ENCODE measurements at regions of chr3 and their contacts with region 1.

Region 1: GRCh38 chr3:44098656-44099415 is 142.8 kb upstream of the TOPAZ1 start:
- DNase-seq: no peak
- H3K4me3 ChIP-seq: no peak overlapping the region
- H3K27ac ChIP-seq: no peak overlapping the region
- H3K4me1 ChIP-seq: peaks cover 0 to 7% (median 3%) of the 10 kb centered on the region in 4 experiments; a peak in 5 of 7 replicates
- H3K27me3 ChIP-seq: no peaks in the 10 kb centered on the region
- CTCF ChIP-seq: no peak
- EP300 ChIP-seq: no peak
- POLR2A ChIP-seq: no peak
- RAD21 ChIP-seq: no peak

Region 2: DNA sequence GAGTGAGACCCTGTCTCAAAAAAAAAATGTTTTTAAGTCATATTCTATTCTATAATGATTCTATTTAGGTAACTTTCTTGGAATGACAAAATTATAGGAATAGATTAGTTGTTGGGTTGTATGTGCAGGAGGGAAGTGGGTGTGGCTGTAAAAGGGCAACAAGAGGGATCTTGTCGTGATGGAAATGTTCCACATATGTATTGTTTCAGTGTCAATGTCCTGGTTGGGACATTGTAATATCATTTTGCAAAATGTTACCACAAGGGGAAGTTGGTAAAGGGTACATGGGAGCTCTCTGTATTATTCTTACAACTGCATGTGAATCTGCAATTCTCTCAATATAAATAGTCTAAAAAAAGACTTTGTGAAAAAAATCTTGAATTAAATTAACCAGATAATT is 422.4 kb before region 1 on chr3:
- CTCF ChIA-PET with region 1: no interaction called
- POLR2A ChIA-PET with region 1: no interaction called
- DNase-seq: no peak
- H3K4me3 ChIP-seq: no peak overlapping the region
- H3K27ac ChIP-seq: no peak overlapping the region
- H3K4me1 ChIP-seq: no peaks in the 10 kb centered on the region
- H3K27me3 ChIP-seq: no peaks in the 10 kb centered on the region
- CTCF ChIP-seq: no peak
- EP300 ChIP-seq: no peak
- POLR2A ChIP-seq: no peak
- RAD21 ChIP-seq: no peak

Region 3: DNA sequence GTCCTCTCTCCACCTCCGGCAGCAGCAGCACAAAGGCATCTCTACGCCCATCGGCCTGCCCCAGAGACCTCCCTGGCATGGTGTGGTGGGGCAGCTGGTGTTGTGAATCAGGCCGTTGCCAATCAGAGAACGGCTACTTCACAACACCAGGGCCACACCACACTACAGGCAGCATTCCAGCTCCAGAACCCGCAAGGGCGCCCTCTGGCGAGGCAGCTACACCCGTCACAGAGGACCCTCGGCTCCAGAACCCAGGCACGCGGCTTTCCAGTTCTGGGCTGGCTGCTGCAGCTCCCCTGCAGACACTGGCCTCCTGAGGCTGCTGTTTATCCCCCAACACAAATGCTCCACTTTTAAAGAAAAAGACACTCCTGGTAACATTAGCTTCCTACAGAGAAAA is 15.3 kb after region 1 on chr3:
- CTCF ChIA-PET with region 1: interaction called, 18 read pairs
- POLR2A ChIA-PET with region 1: no interaction called
- DNase-seq: peak in 1 of 2 experiments; percentile 89
- H3K4me3 ChIP-seq: no peak overlapping the region
- H3K27ac ChIP-seq: no peak overlapping the region
- H3K4me1 ChIP-seq: peaks cover 0 to 3% (median 2%) of the 10 kb centered on the region in 4 experiments; a peak in 2 of 7 replicates
- H3K27me3 ChIP-seq: no peaks in the 10 kb centered on the region
- CTCF ChIP-seq: peak; percentile 76 to 89 (median 85)
- EP300 ChIP-seq: no peak
- POLR2A ChIP-seq: no peak
- RAD21 ChIP-seq: peak; percentile 75 to 84